ENCODE measurements at regions of chr6 and their contacts with region 1.

Region 1: GRCh38 chr6:26103770-26104456 is 16.7 kb downstream of the HFE start:
- DNase-seq: peak; percentile 80 to 83
- H3K4me3 ChIP-seq: peak overlapping the region; percentile 41 to 63 (median 52)
- H3K27ac ChIP-seq: peak overlapping the region; percentile 92
- H3K4me1 ChIP-seq: peaks cover 0 to 3% (median 0%) of the 10 kb centered on the region in 4 experiments; a peak in 2 of 7 replicates
- H3K27me3 ChIP-seq: no peaks in the 10 kb centered on the region
- CTCF ChIP-seq: peak in 2 of 3 experiments; percentile 26 to 37; a peak in 3 of 4 replicates
- EP300 ChIP-seq: peak in 1 of 2 experiments; percentile 96; a peak in 1 of 3 replicates
- POLR2A ChIP-seq: peak; percentile 98 to 99
- RAD21 ChIP-seq: no peak; a peak in 1 of 4 replicates

Region 2: GRCh38 chr6:25922301-25922700 is 181.6 kb before region 1 on chr6:
- CTCF ChIA-PET with region 1: no interaction called
- POLR2A ChIA-PET with region 1: no interaction called
- DNase-seq: no peak
- H3K4me3 ChIP-seq: no peak overlapping the region
- H3K27ac ChIP-seq: no peak overlapping the region
- H3K4me1 ChIP-seq: no peaks in the 10 kb centered on the region
- H3K27me3 ChIP-seq: no peaks in the 10 kb centered on the region
- CTCF ChIP-seq: no peak
- EP300 ChIP-seq: no peak
- POLR2A ChIP-seq: no peak
- RAD21 ChIP-seq: no peak

Region 3: DNA sequence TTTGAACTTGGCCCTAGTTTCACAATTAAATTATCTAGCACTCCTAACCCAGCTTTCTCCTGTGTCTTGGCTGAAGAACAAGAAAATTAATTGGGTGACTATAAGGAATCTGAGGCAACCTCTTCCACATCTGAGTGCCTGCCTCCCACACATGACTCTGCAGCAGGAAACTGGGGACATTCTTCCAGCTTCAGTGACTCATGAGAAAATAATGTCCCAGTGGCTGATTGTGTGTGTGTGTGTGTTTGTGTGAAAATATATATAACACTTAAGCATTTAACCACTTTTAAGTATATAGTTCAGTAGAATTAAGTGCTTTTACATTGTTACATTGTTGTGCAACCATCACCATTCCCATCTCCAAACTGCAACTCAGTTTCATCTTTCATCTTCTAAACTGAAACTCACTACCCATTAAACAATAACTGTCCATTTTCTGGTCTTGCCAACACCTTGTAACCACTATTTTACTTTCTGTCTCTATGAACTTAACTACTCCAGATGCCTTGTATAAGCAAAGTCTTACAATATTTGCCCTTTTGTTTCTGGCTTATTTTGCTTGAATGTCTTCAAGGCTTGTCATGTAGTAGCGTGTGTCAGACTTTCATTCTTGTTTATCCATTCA is 132.6 kb before region 1 on chr6:
- CTCF ChIA-PET with region 1: no interaction called
- POLR2A ChIA-PET with region 1: no interaction called
- DNase-seq: no peak
- H3K4me3 ChIP-seq: no peak overlapping the region
- H3K27ac ChIP-seq: no peak overlapping the region
- H3K4me1 ChIP-seq: peaks cover 3 to 6% (median 5%) of the 10 kb centered on the region in 4 experiments; a peak in 6 of 7 replicates
- H3K27me3 ChIP-seq: no peaks in the 10 kb centered on the region; a peak in 4 of 7 replicates
- CTCF ChIP-seq: no peak
- EP300 ChIP-seq: no peak
- POLR2A ChIP-seq: no peak
- RAD21 ChIP-seq: no peak

Region 4: GRCh38 chr6:26045065-26045927 is 58.6 kb before region 1 on chr6:
- CTCF ChIA-PET with region 1: no interaction called
- POLR2A ChIA-PET with region 1: interaction called, 24 read pairs
- DNase-seq: no peak
- H3K4me3 ChIP-seq: no peak overlapping the region
- H3K27ac ChIP-seq: 0 out of 2 replicates have a peak overlapping the region, but pooled peaks have one; percentile 22
- H3K4me1 ChIP-seq: peaks cover 0 to 6% (median under 1%) of the 10 kb centered on the region in 4 experiments; a peak in 1 of 7 replicates
- H3K27me3 ChIP-seq: no peaks in the 10 kb centered on the region
- CTCF ChIP-seq: peak in 1 of 3 experiments; percentile 1; a peak in 1 of 4 replicates
- EP300 ChIP-seq: no peak
- POLR2A ChIP-seq: no peak
- RAD21 ChIP-seq: no peak

Region 5: DNA sequence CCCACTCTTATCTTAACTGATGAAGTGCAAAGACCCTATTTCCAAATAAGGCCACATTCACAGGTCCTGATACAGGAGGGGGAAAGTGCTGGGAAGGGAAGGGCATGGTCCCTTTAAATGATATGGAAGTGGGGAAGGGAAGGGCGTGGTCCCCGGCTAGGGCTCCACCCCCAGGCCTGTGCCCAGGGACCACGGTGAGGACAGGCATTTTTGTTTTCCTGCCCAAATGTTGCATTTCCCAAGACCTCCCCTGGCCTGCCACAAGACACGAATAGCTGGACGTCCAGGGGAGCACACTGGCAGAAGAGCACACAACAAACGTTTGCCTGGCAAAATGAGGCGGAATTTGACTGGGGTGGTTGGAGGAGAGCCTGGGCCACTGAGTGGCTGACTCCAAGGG is 32.8 kb before region 1 on chr6:
- CTCF ChIA-PET with region 1: interaction called, 481 read pairs
- POLR2A ChIA-PET with region 1: interaction called, 14 read pairs
- DNase-seq: no peak
- H3K4me3 ChIP-seq: no peak overlapping the region
- H3K27ac ChIP-seq: no peak overlapping the region
- H3K4me1 ChIP-seq: peaks cover 0 to 3% (median 0%) of the 10 kb centered on the region in 4 experiments; a peak in 2 of 7 replicates
- H3K27me3 ChIP-seq: no peaks in the 10 kb centered on the region
- CTCF ChIP-seq: no peak
- EP300 ChIP-seq: no peak
- POLR2A ChIP-seq: no peak
- RAD21 ChIP-seq: no peak

Region 6: DNA sequence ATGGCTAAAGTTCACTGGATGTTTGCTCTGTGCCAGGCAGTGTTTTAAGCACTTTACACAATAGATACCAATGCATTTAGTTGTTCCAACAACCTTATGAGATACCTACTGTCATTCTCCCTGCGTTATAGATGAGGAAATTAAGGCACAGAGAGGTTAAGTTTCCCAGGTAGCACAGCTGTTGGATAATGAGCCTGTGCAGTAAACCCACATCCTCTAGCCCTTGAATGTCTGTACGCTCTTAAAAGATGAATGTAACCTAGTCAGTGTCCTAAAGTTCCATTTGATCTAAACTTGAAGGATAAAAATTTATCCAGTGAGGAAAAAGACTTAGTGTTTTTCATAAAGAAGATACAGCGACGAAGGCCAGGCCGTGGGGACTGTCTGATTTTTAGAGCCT is 11.3 kb after region 1 on chr6:
- CTCF ChIA-PET with region 1: interaction called, 6 read pairs
- POLR2A ChIA-PET with region 1: interaction called, 63 read pairs
- DNase-seq: no peak
- H3K4me3 ChIP-seq: no peak overlapping the region
- H3K27ac ChIP-seq: no peak overlapping the region
- H3K4me1 ChIP-seq: peaks cover 0 to 2% (median 0%) of the 10 kb centered on the region in 4 experiments; a peak in 2 of 7 replicates
- H3K27me3 ChIP-seq: no peaks in the 10 kb centered on the region
- CTCF ChIP-seq: no peak
- EP300 ChIP-seq: no peak
- POLR2A ChIP-seq: no peak
- RAD21 ChIP-seq: no peak

Region 7: GRCh38 chr6:26196846-26197648 is 93.1 kb after region 1 on chr6:
- CTCF ChIA-PET with region 1: no interaction called
- POLR2A ChIA-PET with region 1: interaction called, 27 read pairs
- DNase-seq: peak in 1 of 2 experiments; percentile 76
- H3K4me3 ChIP-seq: peak overlapping the region; percentile 85 to 98 (median 89)
- H3K27ac ChIP-seq: peak overlapping the region; percentile 82
- H3K4me1 ChIP-seq: peaks cover 0 to 1% (median 0%) of the 10 kb centered on the region in 4 experiments; a peak in 1 of 7 replicates
- H3K27me3 ChIP-seq: no peaks in the 10 kb centered on the region
- CTCF ChIP-seq: no peak
- EP300 ChIP-seq: no peak
- POLR2A ChIP-seq: peak; percentile 99
- RAD21 ChIP-seq: no peak

Region 8: DNA sequence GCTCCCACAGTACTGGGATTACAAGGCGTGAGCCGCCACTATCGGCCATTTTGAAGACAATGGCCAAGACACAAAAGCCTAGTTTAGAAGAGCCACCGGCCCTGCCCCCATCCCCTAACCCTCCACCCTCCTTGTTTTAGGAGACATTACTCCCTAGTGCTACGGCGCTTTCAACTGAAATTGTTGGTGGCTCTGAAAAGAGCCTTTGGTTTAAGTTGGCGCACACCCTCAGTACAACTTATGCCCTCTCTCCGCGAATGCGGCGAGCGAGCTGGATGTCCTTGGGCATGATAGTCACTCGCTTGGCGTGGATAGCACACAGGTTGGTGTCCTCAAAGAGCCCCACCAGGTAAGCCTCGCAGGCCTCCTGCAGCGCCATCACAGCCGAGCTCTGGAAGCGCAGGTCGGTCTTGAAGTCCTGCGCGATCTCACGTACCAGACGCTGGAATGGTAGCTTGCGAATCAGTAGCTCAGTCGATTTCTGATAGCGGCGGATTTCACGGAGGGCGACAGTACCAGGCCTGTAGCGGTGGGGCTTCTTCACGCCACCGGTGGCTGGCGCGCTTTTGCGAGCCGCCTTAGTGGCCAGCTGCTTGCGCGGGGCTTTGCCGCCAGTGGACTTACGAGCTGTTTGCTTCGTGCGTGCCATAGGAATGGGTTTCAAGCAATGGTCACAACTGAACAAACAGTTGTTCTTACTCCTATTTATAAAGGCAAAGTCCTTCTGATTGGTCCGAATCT is 146.2 kb after region 1 on chr6:
- CTCF ChIA-PET with region 1: no interaction called
- POLR2A ChIA-PET with region 1: interaction called, 10 read pairs
- DNase-seq: peak in 1 of 2 experiments; percentile 73
- H3K4me3 ChIP-seq: peak overlapping the region; percentile 75 to 98 (median 90)
- H3K27ac ChIP-seq: peak overlapping the region; percentile 97
- H3K4me1 ChIP-seq: peaks cover 0 to 5% (median 4%) of the 10 kb centered on the region in 4 experiments; a peak in 5 of 7 replicates
- H3K27me3 ChIP-seq: no peaks in the 10 kb centered on the region
- CTCF ChIP-seq: peak in 2 of 3 experiments; percentile 23 to 34; a peak in 2 of 4 replicates
- EP300 ChIP-seq: 0 out of 3 replicates have a peak, but pooled peaks of 1 of the 2 experiments have one; percentile 34
- POLR2A ChIP-seq: peak; percentile 98
- RAD21 ChIP-seq: no peak

Measured in H1 (cell line).